HEK293T (cell line): ENCODE measurements at regions of chr15 and their contacts with region 1.

Region 1: GRCh38 chr15:40952901-40953712 is at the start of gene CHAC1:
- DNase-seq: peak; percentile 94

Region 2: GRCh38 chr15:40832960-40833359 is 120.1 kb before region 1 on chr15:
- CTCF ChIA-PET with region 1: no interaction called
- POLR2A ChIA-PET with region 1: no interaction called
- DNase-seq: no peak

Region 3: GRCh38 chr15:40906091-40906990 is 46.8 kb before region 1 on chr15:
- CTCF ChIA-PET with region 1: no interaction called
- POLR2A ChIA-PET with region 1: interaction called, 11 read pairs
- DNase-seq: peak; percentile 78

Region 4: DNA sequence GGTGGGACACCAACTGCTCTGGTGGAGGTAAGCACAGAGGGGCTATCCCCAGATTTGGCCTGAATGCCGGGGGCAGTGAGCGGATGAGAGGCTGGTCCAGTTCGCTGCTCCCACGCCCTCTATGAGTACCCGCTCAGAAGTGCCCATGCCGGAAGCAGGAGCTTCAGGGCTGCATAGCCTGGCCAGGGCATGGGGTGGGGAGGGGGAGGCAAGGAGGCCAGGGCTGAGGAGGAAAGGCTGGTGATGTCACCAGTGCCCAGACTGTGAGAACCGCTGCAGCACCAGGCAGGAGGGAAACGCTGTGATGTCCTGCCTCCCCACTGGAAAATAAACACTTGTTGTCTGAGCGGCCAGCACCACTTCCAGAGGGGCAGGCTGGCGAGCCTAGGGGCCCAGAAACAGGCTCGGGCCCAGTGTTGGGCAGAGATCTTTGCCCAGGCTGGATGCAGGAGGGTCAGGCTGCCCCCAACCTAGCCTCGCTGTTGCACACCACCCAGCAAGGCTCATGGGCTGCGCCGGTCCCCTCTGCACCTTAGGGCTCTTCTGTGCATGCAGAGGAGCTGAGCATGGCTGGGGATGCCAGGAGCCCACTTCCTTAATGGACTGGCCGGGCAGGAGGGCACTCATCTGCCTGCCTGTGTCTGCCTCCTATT is 34.8 kb before region 1 on chr15:
- CTCF ChIA-PET with region 1: no interaction called
- POLR2A ChIA-PET with region 1: interaction called, 12 read pairs
- DNase-seq: no peak

Region 5: DNA sequence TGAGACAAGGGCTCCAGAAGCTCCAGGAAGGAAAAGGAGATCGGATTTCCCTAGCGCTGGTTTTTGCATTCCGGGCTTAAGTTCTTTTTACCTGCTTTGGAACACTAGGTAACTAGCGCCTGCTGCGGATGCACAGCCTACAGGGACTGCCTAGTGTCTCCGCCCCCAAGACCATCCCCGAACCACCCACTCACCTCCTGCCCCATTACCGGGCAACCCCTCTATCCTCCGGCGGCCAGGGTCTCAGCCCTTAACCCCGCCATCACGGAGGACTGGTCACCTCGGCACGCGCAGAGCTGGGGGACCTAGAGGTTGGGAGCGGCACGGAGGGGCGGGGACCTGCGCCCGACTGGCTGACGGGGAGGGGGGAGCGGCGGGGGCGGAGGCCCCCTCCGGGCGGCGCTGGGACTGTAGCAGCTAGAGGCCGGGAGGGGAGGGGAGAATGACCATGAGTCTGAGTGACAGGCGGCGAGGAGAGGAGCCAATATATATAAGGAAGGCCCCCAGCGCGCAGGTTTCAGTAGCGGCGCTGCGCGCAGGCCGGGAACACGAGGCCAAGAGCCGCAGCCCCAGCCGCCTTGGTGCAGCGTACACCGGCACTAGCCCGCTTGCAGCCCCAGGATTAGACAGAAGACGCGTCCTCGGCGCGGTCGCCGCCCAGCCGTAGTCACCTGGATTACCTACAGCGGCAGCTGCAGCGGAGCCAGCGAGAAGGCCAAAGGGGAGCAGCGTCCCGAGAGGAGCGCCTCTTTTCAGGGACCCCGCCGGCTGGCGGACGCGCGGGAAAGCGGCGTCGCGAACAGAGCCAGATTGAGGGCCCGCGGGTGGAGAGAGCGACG is 24.1 kb before region 1 on chr15 and contains the start of gene DLL4:
- CTCF ChIA-PET with region 1: interaction called, 7 read pairs
- POLR2A ChIA-PET with region 1: interaction called, 32 read pairs
- DNase-seq: peak; percentile 68

Region 6: GRCh38 chr15:40941528-40942336 is 11.4 kb before region 1 on chr15:
- CTCF ChIA-PET with region 1: interaction called, 5 read pairs
- POLR2A ChIA-PET with region 1: interaction called, 146 read pairs
- DNase-seq: peak; percentile 81

Region 7: GRCh38 chr15:40968290-40969085 is 15.4 kb after region 1 on chr15:
- CTCF ChIA-PET with region 1: no interaction called
- POLR2A ChIA-PET with region 1: interaction called, 85 read pairs
- DNase-seq: no peak